Activated CD8-positive, alpha-beta T cell treated with anti-CD3 and anti-CD28 coated beads for 36 hours (primary cell): ENCODE measurements at regions of chr20 and their contacts with region 1.

Region 1: DNA sequence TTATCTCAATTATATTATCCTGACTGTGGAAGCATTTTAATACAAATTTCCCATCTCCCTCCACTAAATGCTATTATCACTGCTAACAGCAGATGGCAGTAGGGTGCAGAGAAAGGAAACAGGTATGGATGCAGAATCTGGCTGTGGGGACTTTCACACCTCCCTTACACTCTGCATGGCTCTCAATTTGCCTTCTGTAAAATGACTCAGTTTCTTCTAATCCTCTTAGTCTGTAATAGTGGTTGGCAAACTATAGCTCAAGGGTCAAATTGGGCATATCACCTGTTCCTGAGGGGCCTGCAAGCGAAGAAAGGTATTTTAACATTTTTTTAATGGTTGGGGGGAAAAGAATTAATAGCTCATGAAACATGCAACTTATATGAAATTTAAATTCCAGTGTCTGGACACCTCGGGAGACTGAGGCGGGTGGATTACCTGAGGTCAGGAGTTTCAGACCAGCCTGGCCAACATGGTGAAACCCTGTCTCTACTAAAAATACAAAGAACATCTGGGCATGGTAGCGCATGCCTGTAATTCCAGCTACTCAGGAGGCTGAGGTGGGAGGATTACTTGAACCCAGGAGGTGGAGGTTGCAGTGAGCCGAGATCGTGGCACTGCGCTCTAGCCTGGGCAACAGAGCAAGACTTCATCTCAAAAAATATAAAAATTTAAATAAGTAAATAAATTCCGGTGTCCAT is 83.5 kb downstream of the ZMYND8 start:
- DNase-seq: peak; percentile 66
- ATAC-seq: peak; percentile 79
- H3K4me3 Mint-ChIP-seq: no peak overlapping the region
- H3K27ac Mint-ChIP-seq: peak overlapping the region; percentile 92
- H3K4me1 Mint-ChIP-seq: peaks cover 47% of the 10 kb centered on the region
- H3K27me3 Mint-ChIP-seq: no peaks in the 10 kb centered on the region
- CTCF ChIP-seq: peak; percentile 97

Region 2: GRCh38 chr20:47205577-47206498 is 67.2 kb before region 1 on chr20:
- CTCF ChIA-PET with region 1: interaction called, 38 read pairs
- POLR2A ChIA-PET with region 1: interaction called, 3 read pairs
- intact Hi-C with region 1: no loop called
- DNase-seq: peak; percentile 80
- ATAC-seq: peak; percentile 90
- H3K4me3 Mint-ChIP-seq: no peak overlapping the region
- H3K27ac Mint-ChIP-seq: no peak overlapping the region
- H3K4me1 Mint-ChIP-seq: peaks cover 4% of the 10 kb centered on the region
- H3K27me3 Mint-ChIP-seq: no peaks in the 10 kb centered on the region
- CTCF ChIP-seq: peak; percentile 81

Region 3: GRCh38 chr20:47262365-47263013 is 10.6 kb before region 1 on chr20:
- CTCF ChIA-PET with region 1: interaction called, 26 read pairs
- POLR2A ChIA-PET with region 1: interaction called, 3 read pairs
- intact Hi-C with region 1: no loop called
- DNase-seq: no peak
- ATAC-seq: no peak
- H3K4me3 Mint-ChIP-seq: no peak overlapping the region
- H3K27ac Mint-ChIP-seq: no peak overlapping the region
- H3K4me1 Mint-ChIP-seq: peaks cover 39% of the 10 kb centered on the region
- H3K27me3 Mint-ChIP-seq: no peaks in the 10 kb centered on the region
- CTCF ChIP-seq: no peak

Region 4: GRCh38 chr20:47330933-47331864 is 58.2 kb after region 1 on chr20:
- CTCF ChIA-PET with region 1: interaction called, 28 read pairs
- POLR2A ChIA-PET with region 1: no interaction called
- intact Hi-C with region 1: no loop called
- DNase-seq: peak; percentile 12
- ATAC-seq: peak; percentile 80
- H3K4me3 Mint-ChIP-seq: no peak overlapping the region
- H3K27ac Mint-ChIP-seq: peak overlapping the region; percentile 36
- H3K4me1 Mint-ChIP-seq: peaks cover 48% of the 10 kb centered on the region
- H3K27me3 Mint-ChIP-seq: no peaks in the 10 kb centered on the region
- CTCF ChIP-seq: no peak

Region 5: GRCh38 chr20:47392015-47392720 is 119.1 kb after region 1 on chr20:
- CTCF ChIA-PET with region 1: interaction called, 10 read pairs
- POLR2A ChIA-PET with region 1: no interaction called
- intact Hi-C with region 1: no loop called
- DNase-seq: peak; percentile 38
- ATAC-seq: peak; percentile 88
- H3K4me3 Mint-ChIP-seq: no peak overlapping the region
- H3K27ac Mint-ChIP-seq: peak overlapping the region; percentile 65
- H3K4me1 Mint-ChIP-seq: peaks cover 17% of the 10 kb centered on the region
- H3K27me3 Mint-ChIP-seq: no peaks in the 10 kb centered on the region
- CTCF ChIP-seq: no peak

Region 6: GRCh38 chr20:47610247-47610944 is 337.4 kb after region 1 on chr20:
- CTCF ChIA-PET with region 1: interaction called, 21 read pairs
- POLR2A ChIA-PET with region 1: interaction called, 3 read pairs
- intact Hi-C with region 1: no loop called
- DNase-seq: peak; percentile 99
- ATAC-seq: peak; percentile 88
- H3K4me3 Mint-ChIP-seq: peak overlapping the region; percentile 68
- H3K27ac Mint-ChIP-seq: peak overlapping the region; percentile 96
- H3K4me1 Mint-ChIP-seq: peaks cover 86% of the 10 kb centered on the region
- H3K27me3 Mint-ChIP-seq: no peaks in the 10 kb centered on the region
- CTCF ChIP-seq: no peak